Dendritic cell treated with granulocyte-macrophage colony-stimulating factor and Interleukin-4, amounts not matched to agents 40 ng/mL and 50 ng/mL, for 4 days (primary cell): ENCODE measurements at regions of chr2 and their contacts with region 1.

Region 1: GRCh38 chr2:217510771-217511291 is 492.0 kb downstream of the TNS1 start:
- H3K4me3 Mint-ChIP-seq: no peak overlapping the region
- H3K27ac Mint-ChIP-seq: no peak overlapping the region
- H3K4me1 Mint-ChIP-seq: peaks cover 8% of the 10 kb centered on the region
- H3K27me3 Mint-ChIP-seq: peaks cover 22% of the 10 kb centered on the region

Region 2: GRCh38 chr2:216681683-216682082 is 829.1 kb before region 1 on chr2:
- intact Hi-C with region 1: loop called (anchors 1 kb)
- H3K4me3 Mint-ChIP-seq: no peak overlapping the region
- H3K27ac Mint-ChIP-seq: no peak overlapping the region
- H3K4me1 Mint-ChIP-seq: peaks cover 8% of the 10 kb centered on the region
- H3K27me3 Mint-ChIP-seq: peaks cover 37% of the 10 kb centered on the region

Region 3: GRCh38 chr2:216698895-216699294 is 811.9 kb before region 1 on chr2:
- intact Hi-C with region 1: loop called (anchors 1 kb)
- H3K4me3 Mint-ChIP-seq: no peak overlapping the region
- H3K27ac Mint-ChIP-seq: no peak overlapping the region
- H3K4me1 Mint-ChIP-seq: peaks cover 10% of the 10 kb centered on the region
- H3K27me3 Mint-ChIP-seq: peaks cover 48% of the 10 kb centered on the region

Region 4: GRCh38 chr2:217049956-217050355 is 460.9 kb before region 1 on chr2:
- intact Hi-C with region 1: loop called (anchors 10 kb)
- H3K4me3 Mint-ChIP-seq: no peak overlapping the region
- H3K27ac Mint-ChIP-seq: no peak overlapping the region
- H3K4me1 Mint-ChIP-seq: no peaks in the 10 kb centered on the region
- H3K27me3 Mint-ChIP-seq: peaks cover 59% of the 10 kb centered on the region

Region 5: GRCh38 chr2:217142649-217143266 is 368.1 kb before region 1 on chr2:
- intact Hi-C with region 1: loop called (anchors 10 kb)
- H3K4me3 Mint-ChIP-seq: no peak overlapping the region
- H3K27ac Mint-ChIP-seq: no peak overlapping the region
- H3K4me1 Mint-ChIP-seq: no peaks in the 10 kb centered on the region
- H3K27me3 Mint-ChIP-seq: peaks cover 36% of the 10 kb centered on the region

Region 6: DNA sequence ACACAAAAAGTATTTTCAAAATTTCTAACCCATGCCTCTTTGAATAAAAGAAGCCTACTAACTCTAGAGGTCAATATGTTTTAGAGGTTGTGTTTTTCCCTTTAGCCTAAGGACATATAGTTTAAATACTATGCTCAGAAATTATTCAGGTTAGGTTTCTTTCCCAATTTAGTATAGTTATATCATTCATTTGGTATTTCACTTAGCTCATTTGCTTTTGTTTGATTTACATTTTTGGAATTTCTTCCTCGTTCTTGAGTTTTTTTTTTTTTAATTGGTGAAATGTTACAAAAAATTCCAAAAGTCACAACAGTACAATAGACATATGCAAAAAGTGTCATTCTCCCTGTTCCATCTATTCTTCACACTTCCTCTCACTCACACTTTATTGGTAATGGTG is 279.6 kb before region 1 on chr2:
- intact Hi-C with region 1: no loop called
- H3K4me3 Mint-ChIP-seq: no peak overlapping the region
- H3K27ac Mint-ChIP-seq: no peak overlapping the region
- H3K4me1 Mint-ChIP-seq: no peaks in the 10 kb centered on the region
- H3K27me3 Mint-ChIP-seq: peaks cover 78% of the 10 kb centered on the region

Region 7: DNA sequence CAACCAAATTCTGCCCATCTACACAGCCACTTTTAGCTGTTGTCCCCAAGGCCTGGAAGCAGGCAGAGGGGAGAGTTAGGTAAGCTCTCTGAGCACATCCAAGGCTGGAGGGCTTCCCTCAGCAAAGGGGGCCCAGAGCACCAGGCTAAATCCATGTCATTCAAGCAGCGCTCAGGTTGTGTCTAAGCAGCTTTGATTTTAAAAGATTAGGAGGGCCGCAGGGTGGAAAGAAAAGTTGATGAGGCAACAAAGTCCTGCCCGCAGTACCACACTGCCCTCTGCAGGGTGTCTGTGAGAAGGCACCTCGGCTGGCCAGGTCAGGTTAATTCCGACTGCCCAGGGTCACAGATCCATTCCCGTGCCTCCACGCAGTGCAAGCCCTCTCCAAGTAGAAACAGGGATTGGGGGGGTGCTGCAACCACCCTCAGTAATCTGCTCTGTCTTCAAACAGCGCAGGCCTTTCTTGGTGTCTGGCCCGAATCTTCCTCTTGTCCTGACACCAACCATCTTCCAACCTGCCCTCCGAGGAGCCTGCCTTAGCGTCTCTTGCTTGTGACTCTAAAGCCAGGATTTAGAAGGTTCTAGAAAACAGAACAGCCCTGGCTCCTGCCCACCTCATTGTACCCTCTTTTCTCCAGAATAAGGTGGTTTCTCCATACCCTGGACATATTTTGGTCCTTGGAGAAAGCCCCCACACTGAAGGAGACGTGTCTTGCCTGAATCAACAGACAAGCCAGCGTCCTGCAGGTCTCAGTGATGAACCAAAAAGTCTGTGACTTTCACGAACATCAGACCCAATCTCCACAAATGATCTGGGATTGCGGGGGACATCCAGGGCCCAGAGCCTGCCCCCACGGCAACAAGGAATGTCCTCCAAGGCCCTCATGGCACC is 202.8 kb after region 1 on chr2:
- intact Hi-C with region 1: loop called (anchors 10 kb)
- H3K4me3 Mint-ChIP-seq: no peak overlapping the region
- H3K27ac Mint-ChIP-seq: no peak overlapping the region
- H3K4me1 Mint-ChIP-seq: peaks cover 24% of the 10 kb centered on the region
- H3K27me3 Mint-ChIP-seq: peaks cover 53% of the 10 kb centered on the region